WTC11 (cell line): ENCODE measurements at regions of chr9 and their contacts with region 1.

Region 1: DNA sequence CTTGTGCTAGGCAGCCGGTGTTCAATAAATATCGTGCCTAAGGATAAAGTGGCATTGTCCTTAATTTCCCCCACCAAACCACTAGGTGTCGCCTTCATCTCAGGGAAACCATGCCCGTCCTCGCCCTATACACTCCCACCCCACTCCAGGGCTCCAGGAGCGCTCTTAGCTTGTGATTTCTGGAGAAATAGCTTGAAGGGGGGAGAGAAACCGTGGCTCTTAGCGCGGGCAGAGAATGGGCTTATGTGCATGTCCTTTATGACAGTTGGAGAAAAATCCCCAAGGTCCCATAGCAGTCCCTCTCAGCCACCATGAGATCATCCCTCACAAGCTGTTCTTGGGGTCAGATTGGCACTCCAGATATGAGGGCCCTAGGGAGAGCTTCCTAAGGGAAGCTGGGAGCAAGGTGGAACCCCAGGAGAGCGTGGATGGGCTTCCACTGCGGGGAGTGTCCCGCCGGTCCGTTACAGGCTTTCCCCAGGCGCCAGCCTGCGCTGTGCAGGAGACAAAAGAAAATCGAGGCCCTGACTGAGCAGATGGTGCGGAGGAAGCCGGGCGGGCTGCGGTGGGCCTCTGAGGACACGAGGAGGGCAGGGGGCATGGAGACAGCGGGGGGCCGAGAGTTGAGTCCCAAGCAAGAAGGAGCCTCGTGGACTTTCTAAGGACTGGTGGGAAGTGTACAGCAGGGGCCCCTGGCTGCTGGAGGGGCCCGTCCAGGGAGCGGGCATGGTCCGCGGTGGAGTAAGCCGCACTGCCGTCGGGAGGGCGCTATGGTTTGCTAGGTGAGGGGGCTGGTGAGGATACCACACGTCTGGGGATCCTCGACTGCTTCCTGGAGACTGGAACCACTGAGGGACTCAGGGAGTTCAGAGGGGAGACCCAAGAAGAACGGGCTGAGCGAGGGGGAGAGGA is 750 bp upstream of the NPR2 start:
- DNase-seq: peak; percentile 69
- ATAC-seq: peak; percentile 84
- H3K4me3 Mint-ChIP-seq: peak overlapping the region; percentile 90
- H3K27ac Mint-ChIP-seq: no peak overlapping the region; the same call in 1 of the 2 replicates
- H3K4me1 Mint-ChIP-seq: peaks cover 11% of the 10 kb centered on the region
- H3K27me3 Mint-ChIP-seq: peaks cover 3% of the 10 kb centered on the region; the same call in 1 of the 2 replicates
- CTCF ChIP-seq: peak; percentile 67

Region 2: DNA sequence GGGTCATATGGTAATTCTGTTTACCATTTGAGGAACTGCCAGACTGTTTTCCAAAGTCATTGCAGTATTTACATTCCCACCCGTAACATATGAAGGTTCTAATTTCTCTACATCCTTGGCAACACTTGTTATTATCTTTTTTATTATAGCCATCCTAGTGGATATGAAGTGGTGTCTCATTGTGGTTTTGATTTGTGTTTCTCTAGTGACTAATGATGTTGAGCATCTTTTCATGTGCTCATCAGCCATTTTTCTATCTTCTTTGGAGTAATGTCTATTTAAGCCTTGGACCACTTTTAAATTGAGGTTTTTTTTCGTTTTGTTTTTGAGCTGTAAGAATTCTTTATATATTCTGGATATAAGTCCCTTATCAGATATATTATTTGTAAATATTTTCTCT is 433.5 kb before region 1 on chr9:
- CTCF ChIA-PET with region 1: no interaction called
- POLR2A ChIA-PET with region 1: no interaction called
- DNase-seq: no peak
- ATAC-seq: no peak
- H3K4me3 Mint-ChIP-seq: no peak overlapping the region
- H3K27ac Mint-ChIP-seq: no peak overlapping the region
- H3K4me1 Mint-ChIP-seq: no peaks in the 10 kb centered on the region
- H3K27me3 Mint-ChIP-seq: no peaks in the 10 kb centered on the region
- CTCF ChIP-seq: no peak

Region 3: GRCh38 chr9:35732122-35732799 is 58.4 kb before region 1 on chr9 and contains the starts of genes CREB3 and TLN1:
- CTCF ChIA-PET with region 1: interaction called, 12 read pairs
- POLR2A ChIA-PET with region 1: no interaction called
- DNase-seq: peak; percentile 95
- ATAC-seq: peak; percentile 72
- H3K4me3 Mint-ChIP-seq: peak within 1 kb of the TSS; percentile 90
- H3K27ac Mint-ChIP-seq: peak within 1 kb of the TSS; percentile 95
- H3K4me1 Mint-ChIP-seq: peaks cover 14% of the 10 kb centered on the region
- H3K27me3 Mint-ChIP-seq: no peaks in the 10 kb centered on the region
- CTCF ChIP-seq: no peak
- total RNA-seq, gene CREB3: 21.4 to 24.2 TPM (median 23.1 TPM) in 3 replicates
- total RNA-seq, gene TLN1: 97.1 to 109 TPM (median 106 TPM) in 3 replicates

Region 4: GRCh38 chr9:35814841-35815543 is 24.4 kb after region 1 on chr9 and contains the start of gene HINT2:
- CTCF ChIA-PET with region 1: interaction called, 143 read pairs
- POLR2A ChIA-PET with region 1: interaction called, 9 read pairs
- DNase-seq: peak; percentile 99
- ATAC-seq: peak; percentile 80
- H3K4me3 Mint-ChIP-seq: peak within 1 kb of the TSS; percentile 91
- H3K27ac Mint-ChIP-seq: peak within 1 kb of the TSS; percentile 100
- H3K4me1 Mint-ChIP-seq: peaks cover 27% of the 10 kb centered on the region
- H3K27me3 Mint-ChIP-seq: peaks cover 11% of the 10 kb centered on the region
- CTCF ChIP-seq: no peak
- total RNA-seq, gene HINT2: 33.6 to 42.7 TPM (median 42.1 TPM) in 3 replicates

Region 5: DNA sequence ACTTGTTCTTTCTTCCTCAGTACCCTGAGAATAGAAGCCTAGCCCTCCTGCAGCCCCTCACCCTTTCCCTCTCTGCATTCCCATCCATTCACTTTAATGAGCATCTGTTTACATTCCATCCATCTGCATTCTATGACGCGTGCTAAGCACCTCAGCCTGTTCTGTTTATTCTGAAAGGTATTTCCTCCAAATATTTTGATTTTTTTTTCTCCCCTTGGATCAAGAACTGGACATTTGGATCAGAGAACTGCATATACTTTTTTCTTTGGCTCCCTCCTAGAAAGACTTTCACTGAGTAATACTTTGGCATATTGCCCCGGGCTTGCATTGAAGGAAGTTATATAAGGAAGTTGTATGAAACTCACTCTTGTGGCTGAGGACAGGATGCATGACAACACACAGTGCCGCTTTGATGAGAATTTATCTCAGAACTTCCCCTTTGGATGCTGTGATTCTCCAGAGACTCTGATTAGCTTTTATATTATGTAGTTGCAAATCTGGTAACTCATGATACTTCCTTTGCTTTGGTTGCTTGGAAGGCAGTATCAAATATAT is 54.2 kb after region 1 on chr9:
- CTCF ChIA-PET with region 1: interaction called, 11 read pairs
- POLR2A ChIA-PET with region 1: no interaction called
- DNase-seq: no peak
- ATAC-seq: peak; percentile 17
- H3K4me3 Mint-ChIP-seq: peak overlapping the region; percentile 65
- H3K27ac Mint-ChIP-seq: peak overlapping the region; percentile 25
- H3K4me1 Mint-ChIP-seq: peaks cover 37% of the 10 kb centered on the region
- H3K27me3 Mint-ChIP-seq: peaks cover 36% of the 10 kb centered on the region
- CTCF ChIP-seq: no peak

Region 6: GRCh38 chr9:35903049-35903448 is 112.4 kb after region 1 on chr9:
- CTCF ChIA-PET with region 1: interaction called, 20 read pairs
- POLR2A ChIA-PET with region 1: no interaction called
- DNase-seq: no peak
- ATAC-seq: no peak; the same call in 1 of the 2 replicates
- H3K4me3 Mint-ChIP-seq: no peak overlapping the region
- H3K27ac Mint-ChIP-seq: no peak overlapping the region
- H3K4me1 Mint-ChIP-seq: peaks cover 20% of the 10 kb centered on the region
- H3K27me3 Mint-ChIP-seq: peaks cover 5% of the 10 kb centered on the region; the same call in 1 of the 2 replicates
- CTCF ChIP-seq: peak; percentile 68

Region 7: GRCh38 chr9:36023260-36024048 is 232.8 kb after region 1 on chr9:
- CTCF ChIA-PET with region 1: interaction called, 16 read pairs
- POLR2A ChIA-PET with region 1: no interaction called
- DNase-seq: peak; percentile 78
- ATAC-seq: peak; percentile 96
- H3K4me3 Mint-ChIP-seq: no peak overlapping the region; the same call in 1 of the 2 replicates
- H3K27ac Mint-ChIP-seq: no peak overlapping the region
- H3K4me1 Mint-ChIP-seq: peaks cover 4% of the 10 kb centered on the region
- H3K27me3 Mint-ChIP-seq: no peaks in the 10 kb centered on the region; the same call in 1 of the 2 replicates
- CTCF ChIP-seq: peak; percentile 81

Region 8: GRCh38 chr9:36045610-36046009 is 255.0 kb after region 1 on chr9:
- CTCF ChIA-PET with region 1: no interaction called
- POLR2A ChIA-PET with region 1: no interaction called
- DNase-seq: no peak
- ATAC-seq: no peak
- H3K4me3 Mint-ChIP-seq: no peak overlapping the region
- H3K27ac Mint-ChIP-seq: no peak overlapping the region
- H3K4me1 Mint-ChIP-seq: peaks cover 26% of the 10 kb centered on the region
- H3K27me3 Mint-ChIP-seq: no peaks in the 10 kb centered on the region
- CTCF ChIP-seq: no peak